ENCODE measurements at regions of chr19 and their contacts with region 1.

Region 1: DNA sequence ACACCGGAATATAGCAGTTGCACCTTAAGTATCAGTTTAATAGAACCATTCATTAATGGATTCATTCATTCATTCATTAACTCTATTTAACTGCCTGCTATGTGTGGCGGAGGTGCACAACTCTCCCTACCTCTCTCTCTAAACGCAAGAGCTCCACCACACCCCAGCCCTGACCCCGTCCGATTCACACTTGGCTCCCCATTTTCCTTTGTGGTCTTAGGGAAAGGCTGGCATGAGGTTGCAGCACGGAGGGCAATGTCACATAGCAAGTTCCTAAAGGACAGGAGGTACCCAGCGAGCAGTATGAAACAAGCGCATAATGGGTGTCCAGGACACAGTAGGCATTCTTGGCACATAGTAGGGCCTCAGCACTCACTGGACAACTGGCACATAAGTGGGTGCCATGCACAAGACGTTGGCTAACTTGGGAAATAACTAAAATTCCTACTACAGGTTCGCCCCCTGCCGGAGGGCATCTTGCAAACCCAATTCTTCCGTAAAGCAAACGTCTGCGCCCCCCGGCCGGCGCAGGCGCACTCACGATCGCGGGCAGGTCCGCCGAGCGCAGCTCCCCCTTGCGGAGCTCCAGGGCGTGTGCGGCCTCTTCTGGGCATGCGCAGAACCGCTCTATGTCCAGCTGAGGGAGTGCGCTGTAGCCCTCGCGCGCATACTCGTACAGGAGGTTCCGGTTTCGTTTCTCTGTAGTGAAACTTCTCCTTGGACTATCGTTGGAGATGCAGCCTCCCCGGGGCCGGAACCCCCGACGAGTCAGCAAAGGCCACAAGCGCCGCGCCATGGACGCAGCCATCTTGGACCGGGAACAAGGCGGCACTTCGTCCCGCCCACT is at the start of gene SARS2:
- H3K4me3 ChIP-seq: peak within 1 kb of the TSS; percentile 70
- H3K27ac ChIP-seq: peak within 1 kb of the TSS; percentile 81
- H3K4me1 ChIP-seq: peaks cover 10% of the 10 kb centered on the region; the same call in 1 of the 2 replicates
- CTCF ChIP-seq: peak; percentile 100

Region 2: GRCh38 chr19:38478273-38478967 is 451.7 kb before region 1 on chr19:
- CTCF ChIA-PET with region 1: interaction called, 20 read pairs
- POLR2A ChIA-PET with region 1: no interaction called
- H3K4me3 ChIP-seq: no peak overlapping the region
- H3K27ac ChIP-seq: no peak overlapping the region
- H3K4me1 ChIP-seq: no peaks in the 10 kb centered on the region
- CTCF ChIP-seq: peak; percentile 77

Region 3: GRCh38 chr19:38647368-38647965 is 282.7 kb before region 1 on chr19 and contains the start of gene ACTN4:
- CTCF ChIA-PET with region 1: interaction called, 5 read pairs
- POLR2A ChIA-PET with region 1: interaction called, 11 read pairs
- H3K4me3 ChIP-seq: peak within 1 kb of the TSS; percentile 84
- H3K27ac ChIP-seq: peak within 1 kb of the TSS; percentile 96
- H3K4me1 ChIP-seq: peaks cover 37% of the 10 kb centered on the region
- CTCF ChIP-seq: peak; percentile 52; the same call in 1 of the 2 replicates

Region 4: GRCh38 chr19:38849860-38850435 is 80.2 kb before region 1 on chr19 and contains the start of gene HNRNPL:
- CTCF ChIA-PET with region 1: interaction called, 13 read pairs
- POLR2A ChIA-PET with region 1: interaction called, 34 read pairs
- H3K4me3 ChIP-seq: peak within 1 kb of the TSS; percentile 57
- H3K27ac ChIP-seq: peak within 1 kb of the TSS; percentile 100
- H3K4me1 ChIP-seq: peaks cover 32% of the 10 kb centered on the region
- CTCF ChIP-seq: peak; percentile 100

Region 5: GRCh38 chr19:38899447-38900219 is 30.5 kb before region 1 on chr19 and contains the starts of genes NFKBIB and SIRT2:
- CTCF ChIA-PET with region 1: interaction called, 63 read pairs
- POLR2A ChIA-PET with region 1: interaction called, 29 read pairs
- H3K4me3 ChIP-seq: peak within 1 kb of the TSS; percentile 58
- H3K27ac ChIP-seq: peak within 1 kb of the TSS; percentile 85
- H3K4me1 ChIP-seq: peaks cover 21% of the 10 kb centered on the region
- CTCF ChIP-seq: peak; percentile 59; the same call in 1 of the 2 replicates

Region 6: GRCh38 chr19:38917516-38918491 is 12.3 kb before region 1 on chr19:
- CTCF ChIA-PET with region 1: interaction called, 36 read pairs
- POLR2A ChIA-PET with region 1: interaction called, 6 read pairs
- H3K4me3 ChIP-seq: no peak overlapping the region
- H3K27ac ChIP-seq: peak overlapping the region; percentile 17; the same call in 1 of the 2 replicates
- H3K4me1 ChIP-seq: no peaks in the 10 kb centered on the region
- CTCF ChIP-seq: peak; percentile 62

Region 7: DNA sequence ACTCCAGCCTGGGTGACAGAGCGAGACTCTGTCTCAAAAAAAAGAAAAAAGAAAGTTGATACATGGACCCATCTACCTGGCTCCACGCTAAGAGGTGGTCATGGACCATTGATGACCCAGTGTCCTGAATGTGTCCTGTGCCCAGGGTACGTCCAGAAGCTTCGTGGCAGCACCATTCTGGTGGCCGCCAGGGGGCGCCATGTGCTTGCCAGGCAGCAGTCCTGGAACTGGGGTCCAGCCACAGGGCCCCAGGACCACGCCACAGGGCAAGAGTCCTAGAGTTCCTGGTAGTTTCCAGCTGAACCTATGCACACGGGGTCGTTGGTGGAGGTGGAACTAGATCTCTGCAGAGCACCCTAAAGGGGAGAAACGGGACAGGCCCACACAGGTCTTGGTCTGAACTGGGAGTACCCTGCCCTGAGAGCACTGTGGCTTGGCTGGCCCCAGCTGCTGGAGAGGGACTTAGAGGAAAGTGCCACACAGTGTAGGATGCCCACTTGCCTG is 122.1 kb after region 1 on chr19:
- CTCF ChIA-PET with region 1: interaction called, 13 read pairs
- POLR2A ChIA-PET with region 1: no interaction called
- H3K4me3 ChIP-seq: no peak overlapping the region
- H3K27ac ChIP-seq: no peak overlapping the region
- H3K4me1 ChIP-seq: no peaks in the 10 kb centered on the region
- CTCF ChIP-seq: peak; percentile 98

Measured in HEK293 (cell line).